Transverse colon (tissue), 4 donors: ENCODE measurements at regions of chr6 and their contacts with region 1.

Region 1: DNA sequence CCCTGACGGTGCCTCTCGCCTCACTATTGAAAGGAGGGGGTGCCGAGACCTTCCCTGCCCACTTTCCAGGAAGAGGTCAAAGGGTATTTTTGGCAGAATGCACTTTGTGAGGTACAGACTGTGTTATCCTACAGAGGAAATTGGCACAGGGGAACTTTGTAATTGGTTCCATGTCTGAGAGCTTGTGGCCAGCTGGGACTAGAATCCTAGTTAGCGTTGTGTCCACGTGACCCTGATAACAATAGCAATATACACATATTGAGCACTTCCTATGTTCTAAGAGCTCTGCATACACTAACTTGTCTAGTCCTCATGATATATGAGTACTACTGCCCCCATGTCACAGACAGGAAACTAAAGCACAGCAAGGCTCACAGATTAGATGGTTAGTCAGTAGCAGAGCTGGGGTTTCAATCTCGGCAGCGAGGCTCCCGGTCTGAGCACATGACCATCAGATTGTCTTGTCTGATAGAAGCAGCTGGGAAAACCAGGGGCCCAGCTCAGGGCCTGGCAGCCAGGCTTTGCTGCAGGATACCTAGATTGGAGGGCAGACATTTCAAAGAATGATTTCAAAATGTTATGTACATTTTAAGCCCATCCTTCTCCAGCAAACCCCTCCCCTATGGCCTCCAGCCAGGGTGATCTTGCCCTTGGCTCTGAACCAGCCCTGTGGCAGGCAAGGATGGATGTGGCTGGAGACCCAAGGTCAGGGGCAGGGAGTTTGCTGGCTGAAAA is 1.4 kb downstream of the MAPK13 start:
- DNase-seq: peak; percentile 76
- H3K4me3 ChIP-seq: peak overlapping the region; percentile 44 to 69 (median 54)
- H3K27ac ChIP-seq: peak overlapping the region; percentile 87 to 96 (median 90)
- H3K4me1 ChIP-seq: peaks cover 14 to 29% (median 24%) of the 10 kb centered on the region in 4 donors
- H3K27me3 ChIP-seq: peaks cover 7% of the 10 kb centered on the region
- CTCF ChIP-seq: no peak
- EP300 ChIP-seq: no peak
- POLR2A ChIP-seq: peak; percentile 27

Region 2: GRCh38 chr6:36187446-36187845 is 55.8 kb after region 1 on chr6:
- in situ Hi-C with region 1: loop called in 2 of 4 experiments (anchors 10 kb)
- intact Hi-C with region 1: no loop called
- DNase-seq: no peak
- H3K4me3 ChIP-seq: no peak overlapping the region
- H3K27ac ChIP-seq: no peak overlapping the region
- H3K4me1 ChIP-seq: no peaks in the 10 kb centered on the region
- H3K27me3 ChIP-seq: no peaks in the 10 kb centered on the region
- CTCF ChIP-seq: no peak
- EP300 ChIP-seq: no peak
- POLR2A ChIP-seq: no peak

Region 3: DNA sequence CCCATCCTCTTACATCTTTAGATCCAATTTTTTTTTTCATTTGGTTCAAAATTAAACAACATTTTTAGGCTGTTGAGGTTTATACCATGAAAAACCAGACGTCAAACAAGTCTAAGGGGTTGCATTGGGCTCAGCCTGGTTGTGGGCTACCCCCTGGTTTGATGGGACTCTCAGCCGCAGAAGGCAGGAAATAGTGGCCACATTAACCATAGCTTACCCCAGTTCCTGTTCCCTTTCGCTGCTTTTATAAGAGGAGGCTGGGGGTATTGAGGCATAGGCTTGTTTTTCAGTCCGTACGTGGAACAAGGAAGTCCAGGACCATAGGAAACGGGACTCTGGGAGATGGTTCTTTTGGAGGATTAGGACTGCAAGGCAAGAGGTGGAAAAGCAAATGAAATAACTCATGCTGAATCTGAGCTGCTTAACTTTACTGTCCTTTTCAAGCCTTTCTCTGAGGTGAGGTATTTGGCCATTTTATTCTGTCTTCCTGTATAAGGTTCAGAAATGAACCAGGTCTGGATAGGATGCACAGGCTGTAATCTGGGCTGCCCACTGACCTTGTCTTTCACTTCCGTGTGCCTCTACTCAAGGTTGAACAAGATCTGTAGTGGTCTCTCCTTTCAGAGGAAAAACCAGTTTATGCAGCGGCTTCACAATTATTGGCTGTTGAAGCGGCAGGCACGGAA is 72.5 kb after region 1 on chr6:
- in situ Hi-C with region 1: loop called in 1 of 4 experiments (anchors 10 kb)
- intact Hi-C with region 1: no loop called
- DNase-seq: no peak
- H3K4me3 ChIP-seq: no peak overlapping the region
- H3K27ac ChIP-seq: no peak overlapping the region
- H3K4me1 ChIP-seq: peaks cover 3 to 67% (median 12%) of the 10 kb centered on the region in 4 donors
- H3K27me3 ChIP-seq: no peaks in the 10 kb centered on the region
- CTCF ChIP-seq: no peak
- EP300 ChIP-seq: no peak
- POLR2A ChIP-seq: no peak